ENCODE measurements at regions of chr7 and their contacts with region 1.

Region 1: DNA sequence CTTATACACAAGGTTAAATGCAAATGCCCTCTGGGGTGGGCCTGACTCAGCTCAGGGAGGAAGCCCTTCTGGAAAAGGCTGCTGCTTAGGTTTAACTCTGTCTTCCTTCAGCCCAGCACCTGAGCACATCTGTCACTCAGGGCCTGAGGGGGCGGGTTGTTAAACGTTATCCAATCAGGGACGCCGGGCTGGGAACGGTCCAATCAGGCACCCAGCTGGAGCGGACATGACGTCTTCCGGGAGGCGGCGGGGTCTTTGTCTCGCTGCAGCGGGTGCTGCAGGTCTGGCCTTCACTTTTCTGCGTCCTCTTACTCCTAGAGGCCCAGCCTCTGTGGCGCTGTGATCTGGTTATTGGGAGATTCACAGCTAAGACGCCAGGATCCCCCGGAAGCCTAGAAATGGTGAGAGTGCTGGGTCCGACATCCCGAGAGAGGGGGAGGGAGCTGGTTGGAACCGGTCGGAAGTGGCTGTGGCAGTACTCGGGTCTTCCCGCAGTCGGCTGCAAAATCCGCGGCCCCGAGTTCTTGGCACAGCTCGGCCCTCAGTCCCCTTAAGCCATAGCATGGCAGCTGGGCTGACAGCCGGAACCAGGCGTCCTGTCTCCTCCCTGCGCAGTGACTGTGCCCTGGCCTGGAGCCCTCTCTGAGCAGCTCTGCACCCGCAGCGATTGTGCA is at the start of gene ZNF138:
- DNase-seq: peak; percentile 98
- H3K4me3 Mint-ChIP-seq: peak within 1 kb of the TSS; percentile 97
- H3K27ac Mint-ChIP-seq: peak within 1 kb of the TSS; percentile 95
- H3K4me1 Mint-ChIP-seq: peaks cover 26% of the 10 kb centered on the region
- H3K27me3 Mint-ChIP-seq: no peaks in the 10 kb centered on the region
- total RNA-seq, gene ZNF138: 10.6 to 10.7 TPM

Region 2: DNA sequence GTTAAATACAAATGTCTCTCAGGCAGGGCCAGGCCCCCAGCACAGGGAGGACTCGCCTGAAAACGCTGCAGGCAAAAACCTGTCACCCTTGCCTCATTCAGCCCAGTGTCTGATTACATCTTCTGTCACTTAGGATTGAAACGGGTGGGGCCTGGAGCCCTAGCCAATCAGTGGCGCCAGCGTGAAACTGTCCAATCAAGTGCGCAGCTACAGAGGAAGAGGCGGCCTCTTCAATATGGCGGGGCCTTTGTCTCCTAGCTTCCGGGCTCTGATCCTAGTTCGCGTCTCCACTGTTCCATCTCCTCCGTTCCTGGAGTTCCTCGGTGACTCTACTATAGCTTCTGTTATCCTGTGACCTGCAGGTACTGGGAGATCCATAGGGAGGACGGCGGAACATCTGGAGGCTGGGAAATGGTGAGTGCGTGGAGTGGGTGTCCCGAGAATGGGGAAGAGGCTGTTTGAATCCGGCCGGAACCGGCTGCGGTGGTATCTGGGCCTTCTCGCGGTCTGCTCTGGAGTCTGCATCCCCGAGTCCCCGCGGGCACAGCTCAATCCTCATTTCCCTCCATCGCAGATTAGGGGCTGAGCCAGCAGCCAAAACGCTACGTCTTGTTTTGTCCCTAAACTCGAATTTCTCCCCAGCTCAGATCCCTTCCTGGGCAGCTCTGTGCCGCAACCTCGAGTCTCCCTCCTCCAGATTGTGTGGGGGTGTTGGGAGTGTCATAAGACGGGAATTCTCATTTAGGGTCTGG is 480.4 kb before region 1 on chr7 and contains the start of gene ZNF736:
- CTCF ChIA-PET with region 1: no interaction called
- intact Hi-C with region 1: loop called (anchors 1 kb)
- DNase-seq: peak; percentile 94
- H3K4me3 Mint-ChIP-seq: peak within 1 kb of the TSS; percentile 99
- H3K27ac Mint-ChIP-seq: peak within 1 kb of the TSS; percentile 97
- H3K4me1 Mint-ChIP-seq: peaks cover 35% of the 10 kb centered on the region
- H3K27me3 Mint-ChIP-seq: no peaks in the 10 kb centered on the region
- total RNA-seq, gene ZNF736: 22.7 to 24.0 TPM

Region 3: DNA sequence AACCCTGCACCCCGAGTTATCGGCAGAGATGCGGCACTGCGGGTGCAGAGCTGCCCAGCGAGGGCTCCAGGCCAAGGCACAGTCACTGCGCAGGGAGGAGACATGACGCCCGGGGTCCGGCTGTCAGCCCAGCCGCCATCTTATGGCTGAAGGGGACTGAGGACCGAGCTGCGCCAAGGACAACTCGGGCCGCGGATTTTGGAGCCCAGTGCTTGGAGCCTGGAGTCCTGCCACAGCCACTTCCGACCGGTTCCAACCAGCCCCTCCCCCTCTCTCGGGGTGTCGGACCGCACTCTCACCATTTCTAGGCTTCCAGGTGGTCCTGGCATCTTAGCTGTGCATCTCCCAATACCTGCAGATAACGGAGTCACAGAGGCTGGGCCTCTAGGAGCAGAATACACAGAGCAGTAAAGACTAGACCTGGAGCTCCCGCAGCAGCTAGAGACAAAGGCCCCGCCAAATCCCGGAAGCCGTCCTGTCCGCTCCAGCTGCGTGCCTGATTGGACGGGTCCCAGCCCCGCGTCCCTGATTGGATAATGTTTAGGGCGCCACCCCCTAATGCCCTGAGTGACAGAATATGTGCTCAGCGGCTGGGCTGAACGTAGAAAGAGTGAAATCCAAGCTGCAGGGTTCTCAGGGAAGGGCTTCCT is 231.6 kb before region 1 on chr7 and contains the start of gene ZNF680:
- CTCF ChIA-PET with region 1: no interaction called
- intact Hi-C with region 1: loop called (anchors 2 kb)
- DNase-seq: peak; percentile 96
- H3K4me3 Mint-ChIP-seq: peak within 1 kb of the TSS; percentile 100
- H3K27ac Mint-ChIP-seq: peak within 1 kb of the TSS; percentile 97
- H3K4me1 Mint-ChIP-seq: peaks cover 24% of the 10 kb centered on the region
- H3K27me3 Mint-ChIP-seq: no peaks in the 10 kb centered on the region
- total RNA-seq, gene ZNF680: 13.4 to 14.0 TPM

Region 4: GRCh38 chr7:64665980-64666662 is 128.2 kb before region 1 on chr7 and contains the start of gene ZNF107:
- CTCF ChIA-PET with region 1: interaction called, 5 read pairs
- intact Hi-C with region 1: loop called (anchors 1 kb)
- DNase-seq: peak; percentile 93
- H3K4me3 Mint-ChIP-seq: peak within 1 kb of the TSS; percentile 95
- H3K27ac Mint-ChIP-seq: peak within 1 kb of the TSS; percentile 96
- H3K4me1 Mint-ChIP-seq: peaks cover 47% of the 10 kb centered on the region
- H3K27me3 Mint-ChIP-seq: no peaks in the 10 kb centered on the region
- total RNA-seq, gene ZNF107: 7.7 to 8.0 TPM

Region 5: DNA sequence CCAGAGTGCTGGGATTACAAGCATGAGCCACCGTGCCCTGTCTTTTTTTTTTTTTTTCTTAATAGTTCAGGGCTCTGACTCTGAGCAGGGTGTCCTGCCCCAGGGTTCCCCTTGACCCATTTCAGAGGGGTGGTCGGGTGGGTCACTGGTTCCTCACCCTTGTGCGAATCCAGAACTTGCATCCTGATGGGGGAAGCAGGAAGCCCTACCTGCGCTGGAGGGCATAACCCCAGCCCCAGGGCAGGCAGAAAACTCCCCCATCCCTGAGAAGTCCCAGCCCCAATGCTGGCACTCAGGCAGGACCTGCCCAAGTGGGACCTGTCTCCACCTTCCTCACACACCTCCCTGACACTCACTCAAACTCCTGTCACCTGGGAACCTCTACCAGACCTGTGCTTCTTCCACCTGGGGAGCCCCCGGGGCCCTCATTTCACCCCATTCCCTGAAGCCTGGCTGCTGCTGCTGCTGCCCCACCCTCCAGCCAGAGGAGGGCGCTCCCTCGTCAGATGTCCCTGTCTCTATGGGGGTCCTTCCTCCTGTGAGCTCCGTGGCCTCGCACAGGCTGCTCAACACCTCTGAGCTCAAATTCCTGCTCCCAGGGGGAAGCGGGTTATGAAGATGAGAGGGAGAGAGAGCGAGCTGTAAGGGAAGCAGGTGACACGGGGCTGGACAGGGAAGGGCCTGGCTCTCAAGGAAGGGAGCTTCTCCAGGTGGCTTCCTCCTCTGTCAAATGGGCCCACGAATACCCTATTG is 93.6 kb after region 1 on chr7:
- CTCF ChIA-PET with region 1: no interaction called
- intact Hi-C with region 1: loop called (anchors 5 kb)
- DNase-seq: peak; percentile 66
- H3K4me3 Mint-ChIP-seq: peak overlapping the region; percentile 77
- H3K27ac Mint-ChIP-seq: no peak overlapping the region
- H3K4me1 Mint-ChIP-seq: peaks cover 15% of the 10 kb centered on the region
- H3K27me3 Mint-ChIP-seq: peaks cover 62% of the 10 kb centered on the region

Region 6: DNA sequence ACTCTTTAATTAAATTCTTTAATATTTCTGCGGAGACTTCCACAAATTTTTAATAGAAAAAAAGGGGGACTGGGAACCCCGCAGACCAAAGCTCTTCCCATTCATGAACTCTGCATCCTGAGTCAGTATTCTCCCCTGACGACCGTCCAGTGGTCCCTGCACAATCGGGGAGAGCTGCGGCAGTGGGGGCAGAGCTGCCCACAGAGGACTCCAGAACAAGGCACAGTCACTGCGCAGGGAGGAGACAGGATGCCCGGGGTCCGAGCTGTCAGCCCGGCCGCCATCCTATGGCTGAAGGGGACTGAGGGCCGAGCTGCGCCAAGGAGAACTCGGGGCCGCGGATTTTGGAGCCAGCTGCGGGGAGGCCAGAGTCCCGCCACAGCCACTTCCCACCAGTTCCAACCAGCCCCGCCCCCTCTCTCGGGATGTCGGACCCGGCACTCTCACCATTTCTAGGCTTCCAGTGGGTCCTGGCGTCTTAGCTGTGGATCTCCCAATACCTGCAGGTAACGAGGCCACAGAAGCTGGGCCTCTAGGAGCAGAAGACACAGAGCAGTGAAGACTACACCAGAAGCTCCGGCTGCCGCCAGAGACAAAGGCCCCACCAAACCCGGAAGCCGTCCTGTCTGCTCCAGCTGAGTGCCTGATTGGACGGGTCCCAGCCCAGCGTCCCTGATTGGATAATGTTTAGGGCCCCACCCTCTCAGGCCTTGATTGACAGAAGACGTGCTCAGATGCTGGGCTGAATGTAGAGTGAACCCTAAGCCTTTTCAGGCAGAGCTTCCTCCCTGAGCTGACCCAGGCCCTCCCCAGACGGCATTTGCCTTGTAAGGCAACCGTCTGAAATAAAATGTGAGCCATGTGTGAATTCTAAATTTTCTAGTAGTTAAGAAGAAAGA is 212.0 kb after region 1 on chr7 and contains the start of gene ERV3-1:
- CTCF ChIA-PET with region 1: no interaction called
- intact Hi-C with region 1: loop called (anchors 1 kb)
- DNase-seq: peak; percentile 97
- H3K4me3 Mint-ChIP-seq: peak within 1 kb of the TSS; percentile 93
- H3K27ac Mint-ChIP-seq: peak within 1 kb of the TSS; percentile 85
- H3K4me1 Mint-ChIP-seq: peaks cover 28% of the 10 kb centered on the region
- H3K27me3 Mint-ChIP-seq: no peaks in the 10 kb centered on the region
- total RNA-seq, gene ERV3-1: 8.9 to 10.6 TPM